ENCODE measurements at regions of chr11 and their contacts with region 1.

Region 1: DNA sequence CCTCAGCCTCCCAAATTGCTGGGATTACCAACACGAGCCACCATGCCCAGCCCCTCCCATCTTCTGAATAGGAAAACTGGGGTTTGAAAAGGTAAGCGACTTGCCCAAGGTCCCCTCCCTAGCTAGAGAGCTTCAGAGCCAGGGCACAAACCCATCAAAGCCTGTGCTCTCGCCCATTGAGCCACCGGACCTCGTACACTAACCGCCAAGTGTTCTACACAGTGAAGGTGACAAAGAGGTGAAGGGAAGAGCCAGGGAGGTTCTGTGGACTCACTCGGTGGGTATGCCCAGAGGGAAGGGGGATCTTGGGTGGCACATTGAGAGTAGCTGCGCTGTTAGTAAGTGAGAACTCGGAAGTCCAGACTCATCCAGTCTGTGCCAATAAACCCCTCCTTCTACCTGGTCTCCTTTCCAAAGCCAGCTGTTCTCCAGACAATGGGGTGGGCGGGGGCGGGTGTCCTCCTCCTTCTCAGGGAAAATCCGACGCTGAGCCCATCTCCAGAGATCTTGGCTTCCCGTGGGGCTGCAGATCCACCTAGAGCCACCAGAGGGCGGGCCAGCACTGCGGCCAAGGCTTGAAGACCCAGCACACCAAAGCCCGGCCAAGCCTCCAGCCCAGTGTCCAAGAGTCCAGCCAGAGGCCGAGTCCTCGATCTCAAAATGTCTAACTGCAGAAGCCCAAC is 3.2 kb upstream of the RTN4RL2 start:
- DNase-seq: peak; percentile 74
- H3K4me3 Mint-ChIP-seq: no peak overlapping the region
- H3K27ac Mint-ChIP-seq: peak overlapping the region; percentile 44
- H3K4me1 Mint-ChIP-seq: peaks cover 27% of the 10 kb centered on the region
- H3K27me3 Mint-ChIP-seq: peaks cover 53% of the 10 kb centered on the region

Region 2: GRCh38 chr11:57476757-57477506 is 19.8 kb after region 1 on chr11:
- CTCF ChIA-PET with region 1: interaction called, 20 read pairs
- POLR2A ChIA-PET with region 1: no interaction called
- DNase-seq: no peak
- H3K4me3 Mint-ChIP-seq: no peak overlapping the region
- H3K27ac Mint-ChIP-seq: no peak overlapping the region
- H3K4me1 Mint-ChIP-seq: peaks cover 44% of the 10 kb centered on the region
- H3K27me3 Mint-ChIP-seq: peaks cover 39% of the 10 kb centered on the region

Region 3: GRCh38 chr11:57515332-57516060 is 58.4 kb after region 1 on chr11 and contains the start of gene SLC43A1:
- CTCF ChIA-PET with region 1: interaction called, 11 read pairs
- POLR2A ChIA-PET with region 1: no interaction called
- DNase-seq: peak; percentile 36
- H3K4me3 Mint-ChIP-seq: peak within 1 kb of the TSS; percentile 99
- H3K27ac Mint-ChIP-seq: peak within 1 kb of the TSS; percentile 94
- H3K4me1 Mint-ChIP-seq: peaks cover 31% of the 10 kb centered on the region
- H3K27me3 Mint-ChIP-seq: no peaks in the 10 kb centered on the region
- total RNA-seq, gene SLC43A1: 22.9 to 23.4 TPM

Region 4: DNA sequence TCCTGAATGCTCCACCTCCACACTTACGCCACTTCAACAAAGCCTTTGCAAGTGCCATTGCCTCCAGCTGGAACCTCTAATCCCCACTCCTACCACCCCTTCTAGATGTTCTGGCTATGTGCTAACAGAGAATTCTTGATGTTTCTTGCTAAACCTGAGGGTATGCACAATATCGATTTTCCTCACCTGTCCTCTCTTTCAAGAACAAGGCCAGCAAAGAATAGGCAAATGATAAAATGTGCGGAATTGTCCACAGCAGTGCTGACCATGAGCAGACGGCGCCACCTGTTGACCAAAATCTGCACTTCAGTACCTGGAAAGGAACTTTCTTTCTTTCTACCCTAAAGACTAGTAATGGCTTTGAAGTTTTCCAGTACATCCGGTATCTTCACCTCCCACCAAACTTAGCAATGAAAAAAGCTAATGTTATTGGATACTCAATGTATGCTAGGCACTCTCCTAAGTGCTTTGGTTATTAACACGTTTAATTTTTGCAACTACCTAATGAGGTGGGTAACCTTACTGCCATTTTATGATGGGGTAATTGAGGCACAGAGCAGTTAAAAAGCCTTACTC is 70.0 kb after region 1 on chr11:
- CTCF ChIA-PET with region 1: interaction called, 30 read pairs
- POLR2A ChIA-PET with region 1: interaction called, 3 read pairs
- DNase-seq: peak; percentile 81
- H3K4me3 Mint-ChIP-seq: no peak overlapping the region
- H3K27ac Mint-ChIP-seq: peak overlapping the region; percentile 39
- H3K4me1 Mint-ChIP-seq: peaks cover 43% of the 10 kb centered on the region
- H3K27me3 Mint-ChIP-seq: no peaks in the 10 kb centered on the region

Measured in activated CD4-positive, alpha-beta T cell treated with anti-CD3 and anti-CD28 coated beads, Interleukin-2, amount 10 ng/mL, durations not matched to agents 7 days and 5 days (primary cell).